HEK293 (cell line): ENCODE measurements at regions of chr7 and their contacts with region 1.

Region 1: GRCh38 chr7:134432296-134433152 is 26.4 kb downstream of the AKR1B1 start:
- H3K4me3 ChIP-seq: peak overlapping the region; percentile 37
- H3K27ac ChIP-seq: no peak overlapping the region; the same call in 1 of the 2 replicates
- H3K4me1 ChIP-seq: no peaks in the 10 kb centered on the region
- CTCF ChIP-seq: peak; percentile 94

Region 2: DNA sequence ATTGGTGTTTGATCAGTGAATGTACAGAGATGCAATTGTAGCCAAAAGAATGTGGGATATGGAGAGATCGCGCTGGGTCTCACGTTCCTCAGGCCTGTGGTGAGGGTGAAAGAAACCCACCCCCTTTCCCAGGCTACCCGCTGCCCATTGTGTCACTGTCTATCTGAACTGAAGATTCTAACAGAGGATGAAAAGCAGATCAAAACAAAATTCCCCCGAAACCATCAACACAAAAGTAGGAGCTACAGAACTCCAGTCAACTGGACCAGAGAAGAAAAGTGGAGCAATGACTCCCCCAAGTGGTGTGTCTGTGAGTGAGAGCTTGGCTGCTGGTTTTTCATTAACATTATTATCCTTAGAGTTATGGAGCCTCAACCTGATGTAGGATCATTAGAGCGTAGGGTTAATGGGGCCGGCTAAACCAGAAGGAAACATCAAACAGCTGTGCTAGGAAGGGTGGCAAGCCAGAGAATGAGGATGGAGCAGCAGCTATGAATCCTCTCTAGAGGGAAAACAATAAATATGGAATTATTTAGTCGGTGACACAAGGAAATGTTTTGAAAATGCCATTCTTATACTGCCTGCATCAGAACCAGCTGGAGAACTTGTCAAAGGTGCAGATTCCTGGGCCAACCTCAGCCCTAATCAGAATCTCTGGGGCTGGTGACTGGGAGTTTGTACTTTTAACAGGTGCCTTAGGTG is 11.9 kb before region 1 on chr7:
- CTCF ChIA-PET with region 1: interaction called, 17 read pairs
- POLR2A ChIA-PET with region 1: no interaction called
- H3K4me3 ChIP-seq: no peak overlapping the region
- H3K27ac ChIP-seq: no peak overlapping the region
- H3K4me1 ChIP-seq: no peaks in the 10 kb centered on the region
- CTCF ChIP-seq: peak; percentile 54; the same call in 1 of the 2 replicates

Region 3: GRCh38 chr7:134480736-134481135 is 48.2 kb after region 1 on chr7:
- CTCF ChIA-PET with region 1: interaction called, 29 read pairs
- POLR2A ChIA-PET with region 1: no interaction called
- H3K4me3 ChIP-seq: no peak overlapping the region
- H3K27ac ChIP-seq: no peak overlapping the region
- H3K4me1 ChIP-seq: no peaks in the 10 kb centered on the region
- CTCF ChIP-seq: no peak

Region 4: DNA sequence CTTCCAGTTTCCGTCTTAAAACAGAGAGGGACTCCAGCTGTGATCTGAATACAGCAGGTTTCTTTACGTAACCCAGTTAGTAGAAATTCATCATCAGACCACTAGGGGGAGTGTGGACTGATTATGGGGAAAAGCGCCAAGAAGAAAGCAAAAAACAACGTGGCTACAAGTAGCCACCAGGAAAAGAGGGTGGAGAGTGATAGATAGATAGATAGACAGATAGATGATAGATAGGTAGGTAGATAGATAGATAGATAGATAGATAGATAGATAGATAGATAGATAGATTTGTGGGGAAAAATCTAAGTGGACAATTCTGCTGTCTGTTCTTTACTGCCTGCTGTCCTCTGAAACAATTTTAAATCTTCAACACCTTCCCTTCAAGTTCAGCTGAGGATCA is 82.1 kb after region 1 on chr7:
- CTCF ChIA-PET with region 1: interaction called, 167 read pairs
- POLR2A ChIA-PET with region 1: no interaction called
- H3K4me3 ChIP-seq: no peak overlapping the region
- H3K27ac ChIP-seq: no peak overlapping the region
- H3K4me1 ChIP-seq: no peaks in the 10 kb centered on the region
- CTCF ChIP-seq: peak; percentile 66; the same call in 1 of the 2 replicates

Region 5: DNA sequence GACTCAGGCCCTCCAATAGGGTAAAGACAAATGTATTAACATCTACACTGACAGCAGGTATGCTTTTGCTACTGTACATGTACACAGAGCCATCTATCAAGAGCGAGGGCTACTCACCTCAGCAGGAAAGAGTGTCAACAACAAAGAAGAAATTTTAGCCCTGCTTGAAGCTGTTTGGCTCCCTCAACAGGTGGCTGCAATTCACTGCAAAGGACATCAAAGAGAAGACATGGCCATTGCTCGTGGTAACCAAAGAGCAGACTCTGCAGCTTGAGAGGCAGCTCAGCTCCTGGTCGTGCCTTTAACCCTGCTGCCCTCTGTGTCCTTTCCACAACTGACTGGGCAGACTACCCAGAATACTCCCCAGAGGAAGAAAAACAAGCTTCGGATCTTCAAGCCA is 121.5 kb after region 1 on chr7:
- CTCF ChIA-PET with region 1: interaction called, 67 read pairs
- POLR2A ChIA-PET with region 1: interaction called, 3 read pairs
- H3K4me3 ChIP-seq: no peak overlapping the region
- H3K27ac ChIP-seq: no peak overlapping the region
- H3K4me1 ChIP-seq: no peaks in the 10 kb centered on the region
- CTCF ChIP-seq: peak; percentile 26; the same call in 1 of the 2 replicates

Region 6: GRCh38 chr7:134605973-134606923 is 173.7 kb after region 1 on chr7:
- CTCF ChIA-PET with region 1: interaction called, 58 read pairs
- POLR2A ChIA-PET with region 1: interaction called, 4 read pairs
- H3K4me3 ChIP-seq: no peak overlapping the region
- H3K27ac ChIP-seq: no peak overlapping the region
- H3K4me1 ChIP-seq: no peaks in the 10 kb centered on the region
- CTCF ChIP-seq: peak; percentile 57

Region 7: DNA sequence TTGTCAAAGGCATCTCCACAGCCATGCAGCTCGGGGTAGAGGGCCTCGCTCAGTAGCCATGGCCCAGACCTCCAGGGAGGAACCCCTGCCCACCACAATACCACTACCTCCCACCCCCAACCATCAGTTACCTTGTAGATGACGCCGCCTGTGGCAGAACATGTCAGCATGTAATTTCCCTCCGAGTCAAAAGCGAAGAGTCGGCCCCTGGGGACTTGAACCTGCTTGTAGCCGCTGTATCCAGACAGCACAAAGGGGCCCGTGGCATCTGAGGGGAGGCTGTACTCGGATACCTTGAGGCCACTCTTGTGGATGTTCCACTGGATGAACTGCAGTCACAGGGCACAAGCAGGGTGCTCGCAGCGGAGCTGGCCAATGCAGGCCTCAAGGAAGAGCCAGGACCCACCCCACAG is 754.3 kb after region 1 on chr7:
- CTCF ChIA-PET with region 1: no interaction called
- POLR2A ChIA-PET with region 1: no interaction called
- H3K4me3 ChIP-seq: no peak overlapping the region
- H3K27ac ChIP-seq: no peak overlapping the region
- H3K4me1 ChIP-seq: no peaks in the 10 kb centered on the region
- CTCF ChIP-seq: no peak